Posterior vena cava (tissue), 2 donors: ENCODE measurements at regions of chr1 and their contacts with region 1.

Region 1: DNA sequence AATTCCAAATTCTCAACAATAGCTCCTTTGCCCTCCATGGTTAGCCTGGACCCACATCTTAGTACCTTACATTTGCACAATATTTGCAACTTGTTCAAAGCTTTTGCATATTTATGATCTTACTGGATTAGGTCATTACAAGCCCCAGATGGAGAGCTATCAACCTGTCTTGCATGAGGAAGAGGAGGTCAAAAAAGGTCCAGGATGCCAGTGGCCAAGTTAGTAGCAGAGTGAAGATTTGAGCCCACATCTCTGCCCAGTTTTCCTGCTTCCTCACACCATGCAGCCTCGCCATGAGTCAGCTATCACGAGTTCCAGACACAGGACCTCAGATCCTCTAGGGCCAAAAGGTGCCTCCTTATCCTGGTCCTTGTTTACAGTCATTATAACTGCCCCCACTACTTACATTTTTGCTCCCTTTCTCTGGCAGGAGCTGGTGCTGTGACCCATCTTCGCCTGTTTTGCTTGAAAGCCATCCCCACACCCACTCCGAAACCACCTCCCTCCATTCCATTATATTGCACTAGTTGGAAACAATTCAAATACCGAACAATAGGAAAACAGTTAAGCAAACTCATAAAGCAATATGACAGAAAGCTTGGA is 5.0 kb upstream of the AHCYL1 start:
- DNase-seq: no peak

Region 2: DNA sequence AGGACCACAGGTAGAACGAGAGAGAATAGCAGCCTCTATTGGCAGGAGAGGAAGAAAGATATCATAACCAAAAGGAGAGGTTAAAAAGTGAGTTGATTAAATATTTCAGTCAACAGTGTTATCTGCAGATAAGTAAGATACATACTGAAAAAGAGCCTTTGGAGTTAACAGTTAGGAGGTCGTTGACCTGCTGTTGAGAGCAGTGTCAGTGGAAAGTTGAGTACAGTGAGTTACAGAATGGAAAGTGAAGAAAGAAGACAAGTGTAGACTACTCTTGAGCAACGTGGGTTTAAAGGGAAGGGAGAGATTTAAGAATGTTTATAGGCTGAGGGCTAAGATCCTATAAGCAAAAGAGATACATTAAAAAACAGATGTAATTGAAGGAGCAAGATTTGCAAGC is 390.4 kb before region 1 on chr1:
- intact Hi-C with region 1: no loop called
- DNase-seq: no peak

Region 3: GRCh38 chr1:109910123-109910962 is 69.2 kb before region 1 on chr1 and contains the start of gene CSF1:
- intact Hi-C with region 1: no loop called
- DNase-seq: peak; percentile 93
- total RNA-seq, gene CSF1: 64.1 to 68.7 TPM

Region 4: GRCh38 chr1:109923131-109923945 is 56.3 kb before region 1 on chr1:
- intact Hi-C with region 1: loop called (anchors 5 kb)
- DNase-seq: no peak

Region 5: GRCh38 chr1:110214516-110215379 is 235.2 kb after region 1 on chr1:
- intact Hi-C with region 1: no loop called
- DNase-seq: no peak